H1 (cell line): ENCODE measurements at regions of chr5 and their contacts with region 1.

Region 1: GRCh38 chr5:115069087-115069968 is 100.4 kb downstream of the TRIM36 start:
- DNase-seq: peak in 1 of 2 experiments; percentile 58
- H3K4me3 ChIP-seq: no peak overlapping the region
- H3K27ac ChIP-seq: no peak overlapping the region
- H3K4me1 ChIP-seq: peaks cover 0 to 12% (median 3%) of the 10 kb centered on the region in 4 experiments; a peak in 4 of 7 replicates
- H3K27me3 ChIP-seq: no peaks in the 10 kb centered on the region
- CTCF ChIP-seq: peak; percentile 9 to 86 (median 83)
- EP300 ChIP-seq: no peak
- POLR2A ChIP-seq: no peak
- RAD21 ChIP-seq: peak; percentile 95 to 96

Region 2: GRCh38 chr5:114803353-114803752 is 266.0 kb before region 1 on chr5:
- CTCF ChIA-PET with region 1: interaction called, 18 read pairs
- POLR2A ChIA-PET with region 1: no interaction called
- DNase-seq: no peak
- H3K4me3 ChIP-seq: no peak overlapping the region
- H3K27ac ChIP-seq: no peak overlapping the region
- H3K4me1 ChIP-seq: no peaks in the 10 kb centered on the region
- H3K27me3 ChIP-seq: no peaks in the 10 kb centered on the region
- CTCF ChIP-seq: no peak; a peak in 1 of 4 replicates
- EP300 ChIP-seq: no peak
- POLR2A ChIP-seq: no peak
- RAD21 ChIP-seq: peak; percentile 18 to 27; a peak in 3 of 4 replicates

Region 3: GRCh38 chr5:115033861-115034260 is 35.5 kb before region 1 on chr5:
- CTCF ChIA-PET with region 1: interaction called, 18 read pairs
- POLR2A ChIA-PET with region 1: no interaction called
- DNase-seq: peak; percentile 39 to 56
- H3K4me3 ChIP-seq: no peak overlapping the region
- H3K27ac ChIP-seq: no peak overlapping the region
- H3K4me1 ChIP-seq: no peaks in the 10 kb centered on the region; a peak in 1 of 7 replicates
- H3K27me3 ChIP-seq: no peaks in the 10 kb centered on the region
- CTCF ChIP-seq: peak; percentile 73 to 83 (median 80)
- EP300 ChIP-seq: no peak
- POLR2A ChIP-seq: no peak
- RAD21 ChIP-seq: peak; percentile 94 to 95

Region 4: DNA sequence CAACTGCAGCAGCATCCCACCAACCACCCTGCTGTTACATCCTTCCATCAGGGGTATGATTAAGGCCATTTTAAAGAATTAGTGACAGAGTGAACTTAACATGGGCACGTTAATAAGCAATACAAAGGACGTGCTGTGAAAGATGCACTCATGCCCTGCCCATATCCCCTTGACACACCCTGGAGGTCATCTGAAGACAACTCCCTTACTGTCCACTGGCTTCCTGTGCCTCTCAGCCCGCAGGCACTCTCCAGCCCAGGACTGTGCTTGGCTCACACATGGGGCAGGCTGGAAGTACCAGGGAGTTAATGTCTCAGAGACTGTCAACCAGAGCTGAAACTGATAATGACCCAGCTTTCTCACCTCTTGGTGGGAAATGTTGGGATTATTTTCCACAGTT is 18.6 kb after region 1 on chr5:
- CTCF ChIA-PET with region 1: interaction called, 17 read pairs
- POLR2A ChIA-PET with region 1: no interaction called
- DNase-seq: no peak
- H3K4me3 ChIP-seq: no peak overlapping the region
- H3K27ac ChIP-seq: no peak overlapping the region
- H3K4me1 ChIP-seq: peaks cover 3 to 7% (median 6%) of the 10 kb centered on the region in 4 experiments; a peak in 5 of 7 replicates
- H3K27me3 ChIP-seq: no peaks in the 10 kb centered on the region
- CTCF ChIP-seq: no peak
- EP300 ChIP-seq: no peak
- POLR2A ChIP-seq: no peak
- RAD21 ChIP-seq: no peak